ENCODE measurements at regions of chr7 and their contacts with region 1.

Region 1: GRCh38 chr7:106153891-106154449 is 41.9 kb upstream of the SYPL1 start:
- DNase-seq: peak; percentile 83 to 87 (median 85)
- ATAC-seq: peak; percentile 99
- H3K4me3 ChIP-seq: no peak overlapping the region
- H3K27ac ChIP-seq: no peak overlapping the region
- H3K4me1 ChIP-seq: no peaks in the 10 kb centered on the region
- H3K27me3 ChIP-seq: peaks cover 45 to 62% of the 10 kb centered on the region in 2 experiments
- CTCF ChIP-seq: peak; percentile 97 to 99 (median 99)
- EP300 ChIP-seq: no peak
- POLR2A ChIP-seq: no peak
- RAD21 ChIP-seq: peak; percentile 100

Region 2: GRCh38 chr7:105752671-105753275 is 401.2 kb before region 1 on chr7:
- CTCF ChIA-PET with region 1: no interaction called
- POLR2A ChIA-PET with region 1: no interaction called
- in situ Hi-C with region 1: loop called (anchors 5 kb)
- intact Hi-C with region 1: no loop called
- DNase-seq: no peak
- ATAC-seq: no peak
- H3K4me3 ChIP-seq: no peak overlapping the region
- H3K27ac ChIP-seq: no peak overlapping the region
- H3K4me1 ChIP-seq: no peaks in the 10 kb centered on the region
- H3K27me3 ChIP-seq: peaks cover 0 to 18% of the 10 kb centered on the region in 2 experiments; a peak in 1 of 5 replicates
- CTCF ChIP-seq: no peak
- EP300 ChIP-seq: no peak
- POLR2A ChIP-seq: no peak
- RAD21 ChIP-seq: no peak

Region 3: GRCh38 chr7:105934572-105935185 is 219.3 kb before region 1 on chr7:
- CTCF ChIA-PET with region 1: interaction called, 3 read pairs
- POLR2A ChIA-PET with region 1: no interaction called
- in situ Hi-C with region 1: no loop called
- intact Hi-C with region 1: loop called (anchors 5 kb)
- DNase-seq: peak in 2 of 4 experiments; percentile 36 to 47
- ATAC-seq: peak; percentile 81
- H3K4me3 ChIP-seq: no peak overlapping the region
- H3K27ac ChIP-seq: no peak overlapping the region
- H3K4me1 ChIP-seq: no peaks in the 10 kb centered on the region
- H3K27me3 ChIP-seq: peaks cover 10 to 51% of the 10 kb centered on the region in 2 experiments
- CTCF ChIP-seq: peak; percentile 39 to 57 (median 55); a peak in 5 of 6 replicates
- EP300 ChIP-seq: no peak
- POLR2A ChIP-seq: no peak
- RAD21 ChIP-seq: peak; percentile 20 to 56; a peak in 2 of 4 replicates

Region 4: GRCh38 chr7:106050011-106050745 is 103.8 kb before region 1 on chr7:
- CTCF ChIA-PET with region 1: interaction called, 125 read pairs
- POLR2A ChIA-PET with region 1: no interaction called
- in situ Hi-C with region 1: loop called (anchors 5 kb)
- intact Hi-C with region 1: no loop called
- DNase-seq: peak in 2 of 4 experiments; percentile 43 to 46
- ATAC-seq: peak; percentile 78
- H3K4me3 ChIP-seq: no peak overlapping the region
- H3K27ac ChIP-seq: no peak overlapping the region
- H3K4me1 ChIP-seq: no peaks in the 10 kb centered on the region
- H3K27me3 ChIP-seq: peaks cover 69 to 78% of the 10 kb centered on the region in 2 experiments
- CTCF ChIP-seq: peak; percentile 37 to 60 (median 58)
- EP300 ChIP-seq: no peak
- POLR2A ChIP-seq: no peak
- RAD21 ChIP-seq: peak; percentile 49 to 79

Region 5: GRCh38 chr7:106166655-106167342 is 12.8 kb after region 1 on chr7:
- CTCF ChIA-PET with region 1: interaction called, 13 read pairs
- POLR2A ChIA-PET with region 1: interaction called, 3 read pairs
- in situ Hi-C with region 1: no loop called
- intact Hi-C with region 1: no loop called
- DNase-seq: peak; percentile 75 to 87 (median 84)
- ATAC-seq: peak; percentile 92
- H3K4me3 ChIP-seq: no peak overlapping the region
- H3K27ac ChIP-seq: no peak overlapping the region
- H3K4me1 ChIP-seq: no peaks in the 10 kb centered on the region
- H3K27me3 ChIP-seq: peaks cover 0 to 18% of the 10 kb centered on the region in 2 experiments; a peak in 2 of 5 replicates
- CTCF ChIP-seq: peak; percentile 79 to 98 (median 92)
- EP300 ChIP-seq: no peak
- POLR2A ChIP-seq: no peak
- RAD21 ChIP-seq: peak; percentile 85 to 92

Measured in K562 (cell line).